Caki2 (cell line): ENCODE measurements at regions of chr1 and their contacts with region 1.

Region 1: GRCh38 chr1:224623743-224624333 is 7.7 kb downstream of the CNIH3 start:
- DNase-seq: peak; percentile 50

Region 2: DNA sequence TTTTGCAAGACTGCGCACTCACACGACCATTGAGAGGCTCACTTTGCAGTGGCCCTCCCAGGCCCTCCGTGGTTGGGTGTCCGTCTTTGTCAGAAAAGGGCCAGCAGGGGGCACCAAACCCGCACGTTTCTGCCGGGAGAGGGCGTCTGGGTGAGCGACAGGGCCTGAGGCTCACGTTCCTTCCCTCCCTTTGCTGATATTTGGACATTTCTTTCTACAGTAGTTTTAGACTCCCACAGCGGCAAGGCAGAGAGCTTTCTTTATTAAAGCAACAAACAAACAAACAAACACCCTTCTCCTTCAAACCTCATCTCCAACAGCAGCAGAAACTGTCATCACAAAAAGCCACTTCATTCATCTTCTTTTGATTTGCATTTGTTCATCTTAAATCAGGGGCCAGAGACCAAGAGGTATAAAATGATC is 110.0 kb before region 1 on chr1:
- in situ Hi-C with region 1: loop called (anchors 25 kb)
- DNase-seq: peak; percentile 75

Region 3: DNA sequence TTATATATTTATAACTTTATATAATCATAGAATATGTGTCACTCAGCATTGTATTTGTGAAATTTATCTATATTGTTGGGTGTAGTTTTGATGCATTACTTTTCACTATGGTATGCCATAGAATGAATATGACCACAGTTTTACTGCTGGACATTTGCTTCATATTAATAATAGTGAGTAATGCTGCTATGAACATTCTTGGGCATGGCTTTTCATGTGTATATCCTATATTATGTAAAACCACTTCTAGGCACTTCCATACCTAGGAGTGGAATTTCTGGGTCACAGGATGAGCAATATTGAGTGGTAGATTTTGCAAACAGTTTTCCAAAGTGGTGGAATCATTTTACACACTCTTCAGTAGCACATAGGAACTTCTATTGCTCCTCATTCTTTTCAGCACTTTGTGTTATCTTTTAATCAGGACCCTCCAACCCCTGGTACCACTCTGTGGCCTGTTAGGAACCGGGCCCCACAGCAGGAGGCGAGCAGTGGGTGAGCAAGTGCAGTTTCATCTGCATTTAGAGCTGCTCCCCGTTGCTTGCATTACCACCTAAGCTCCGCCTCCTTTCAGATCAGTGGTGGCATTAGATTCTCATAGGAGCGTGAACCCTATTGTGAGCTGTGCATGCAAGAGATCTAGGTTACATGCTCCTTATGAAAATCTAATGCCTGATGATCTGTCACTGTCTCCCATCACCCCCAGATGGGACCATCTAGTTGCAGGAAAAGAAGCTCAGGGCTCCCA is 63.7 kb before region 1 on chr1:
- in situ Hi-C with region 1: no loop called
- DNase-seq: no peak

Region 4: GRCh38 chr1:224804220-224804619 is 180.4 kb after region 1 on chr1:
- in situ Hi-C with region 1: no loop called
- DNase-seq: no peak

Region 5: DNA sequence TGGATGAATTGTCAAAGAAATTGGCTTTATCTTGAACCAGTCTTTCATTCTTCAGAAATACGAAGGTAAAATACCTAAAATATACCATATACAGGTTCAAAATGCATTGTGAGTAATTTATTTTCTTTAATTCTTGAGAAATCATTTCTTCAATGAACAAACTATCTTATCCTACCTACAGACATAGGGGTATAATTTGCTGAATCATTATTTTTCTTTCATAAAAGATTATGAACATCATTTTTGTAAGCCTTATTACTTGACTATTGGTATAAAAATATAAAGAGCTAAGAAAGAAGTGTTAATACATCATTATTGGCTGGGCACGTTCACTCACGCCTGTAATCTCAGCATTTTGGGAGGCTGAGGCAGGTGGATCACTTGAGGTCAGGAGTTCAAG is 473.3 kb after region 1 on chr1:
- in situ Hi-C with region 1: no loop called
- DNase-seq: no peak